ENCODE measurements at regions of chr19 and their contacts with region 1.

Region 1: DNA sequence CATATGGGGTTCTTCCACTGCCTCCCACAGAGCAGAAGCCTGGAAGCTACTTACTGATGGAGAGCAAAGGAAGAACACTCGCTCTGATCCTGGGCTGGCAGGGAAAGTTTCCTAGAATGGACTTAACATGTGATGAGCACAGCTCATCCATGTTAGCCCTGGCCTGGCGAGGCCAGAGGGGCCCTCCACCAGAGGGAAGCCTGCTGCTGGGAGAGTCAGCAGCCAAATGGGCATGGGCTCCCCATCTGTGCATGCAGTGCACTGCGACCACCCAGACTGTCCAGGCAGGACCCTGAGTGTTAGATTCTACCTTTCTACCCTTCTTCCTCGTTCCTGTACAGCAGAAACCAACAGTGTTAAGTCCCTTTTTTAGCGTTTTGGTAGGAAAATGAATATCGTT is 8.9 kb downstream of the HNRNPUL1 start:
- DNase-seq: no peak
- H3K4me3 ChIP-seq: no peak overlapping the region
- H3K27ac ChIP-seq: no peak overlapping the region
- H3K4me1 ChIP-seq: no peaks in the 10 kb centered on the region
- H3K27me3 ChIP-seq: no peaks in the 10 kb centered on the region
- CTCF ChIP-seq: no peak

Region 2: DNA sequence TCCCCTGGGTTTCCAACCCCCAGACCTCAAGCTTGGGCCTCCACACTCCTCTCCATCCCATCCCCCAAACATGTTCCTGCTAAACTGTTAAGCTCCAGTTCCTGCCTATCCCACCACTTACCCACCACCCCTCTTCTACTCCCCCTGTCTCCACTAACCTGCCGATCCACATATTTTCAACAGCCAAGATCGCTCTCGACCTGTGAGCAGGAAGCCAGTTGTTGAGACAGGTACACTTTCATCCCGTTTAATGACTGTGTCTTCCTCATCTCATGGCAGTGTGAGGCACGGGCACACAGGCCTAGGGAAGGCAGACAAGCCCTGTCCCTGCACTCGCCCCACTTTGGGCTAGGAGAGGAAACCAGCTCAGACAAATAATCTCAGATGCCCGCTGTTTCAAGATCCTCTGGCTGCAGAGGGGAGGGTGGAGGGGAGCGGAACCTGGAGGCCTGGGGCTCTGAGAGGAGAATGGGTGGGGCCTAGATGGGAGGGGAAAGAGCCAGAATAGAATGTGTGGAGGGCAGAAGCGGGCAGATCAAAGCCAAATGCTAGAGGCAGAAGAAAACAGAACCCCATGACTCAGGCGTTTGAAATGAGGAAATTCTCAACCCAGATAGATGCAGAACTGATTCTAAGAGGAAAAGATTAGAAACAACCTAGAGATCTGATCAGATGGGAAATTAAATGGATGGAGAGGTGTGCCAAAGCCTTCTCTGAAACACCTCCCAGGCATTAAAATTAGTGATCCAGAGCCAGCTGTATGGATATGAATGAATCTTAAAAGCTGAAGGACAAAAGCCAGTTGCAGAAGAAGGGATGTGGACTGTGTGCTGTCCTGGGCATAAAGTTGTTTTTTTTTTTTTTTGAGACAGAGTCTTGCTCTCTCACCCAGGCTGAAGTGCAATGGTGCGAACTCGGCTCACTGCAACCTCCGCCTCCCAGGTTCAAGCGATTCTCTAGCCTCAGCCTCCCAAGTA is 97.0 kb before region 1 on chr19:
- CTCF ChIA-PET with region 1: no interaction called
- dilution Hi-C with region 1: loop called (anchors 5 kb)
- in situ Hi-C with region 1: no loop called
- intact Hi-C with region 1: no loop called
- DNase-seq: peak; percentile 71
- H3K4me3 ChIP-seq: no peak overlapping the region
- H3K27ac ChIP-seq: no peak overlapping the region
- H3K4me1 ChIP-seq: peaks cover 12% of the 10 kb centered on the region
- H3K27me3 ChIP-seq: no peaks in the 10 kb centered on the region
- CTCF ChIP-seq: no peak

Region 3: GRCh38 chr19:41218615-41219507 is 54.2 kb before region 1 on chr19 and contains the start of gene AXL:
- CTCF ChIA-PET with region 1: no interaction called
- dilution Hi-C with region 1: loop called (anchors 5 kb)
- in situ Hi-C with region 1: no loop called
- intact Hi-C with region 1: no loop called
- DNase-seq: peak; percentile 95
- H3K4me3 ChIP-seq: peak within 1 kb of the TSS; percentile 69 to 74 (median 72)
- H3K27ac ChIP-seq: peak within 1 kb of the TSS; percentile 92
- H3K4me1 ChIP-seq: peaks cover 44% of the 10 kb centered on the region
- H3K27me3 ChIP-seq: no peaks in the 10 kb centered on the region
- CTCF ChIP-seq: no peak
- total RNA-seq, gene AXL: 121 to 141 TPM

Region 4: GRCh38 chr19:41397086-41398049 is 124.3 kb after region 1 on chr19 and contains the starts of genes BCKDHA and EXOSC5:
- CTCF ChIA-PET with region 1: no interaction called
- dilution Hi-C with region 1: no loop called
- in situ Hi-C with region 1: no loop called
- intact Hi-C with region 1: no loop called
- DNase-seq: peak; percentile 99
- H3K4me3 ChIP-seq: peak within 1 kb of the TSS; percentile 90 to 97 (median 94)
- H3K27ac ChIP-seq: peak within 1 kb of the TSS; percentile 97
- H3K4me1 ChIP-seq: peaks cover 7% of the 10 kb centered on the region
- H3K27me3 ChIP-seq: no peaks in the 10 kb centered on the region
- CTCF ChIP-seq: no peak
- total RNA-seq, gene BCKDHA: 13.5 to 36.5 TPM
- total RNA-seq, gene EXOSC5: 16.5 to 17.3 TPM